OCI-LY7 (cell line): ENCODE measurements at regions of chr14 and their contacts with region 1.

Region 1: GRCh38 chr14:75230140-75231045 is 48.2 kb upstream of the FOS start:
- DNase-seq: peak; percentile 72
- H3K4me3 ChIP-seq: peak overlapping the region; percentile 5
- H3K27ac ChIP-seq: peak overlapping the region; percentile 58
- H3K4me1 ChIP-seq: peaks cover 51% of the 10 kb centered on the region
- CTCF ChIP-seq: peak; percentile 66; the same call in 1 of the 2 replicates

Region 2: GRCh38 chr14:75132382-75133086 is 97.9 kb before region 1 on chr14:
- CTCF ChIA-PET with region 1: no interaction called
- POLR2A ChIA-PET with region 1: interaction called, 4 read pairs
- intact Hi-C with region 1: loop called (anchors 5 kb)
- DNase-seq: peak; percentile 82
- H3K4me3 ChIP-seq: no peak overlapping the region
- H3K27ac ChIP-seq: no peak overlapping the region
- H3K4me1 ChIP-seq: peaks cover 15% of the 10 kb centered on the region
- CTCF ChIP-seq: peak; percentile 96

Region 3: DNA sequence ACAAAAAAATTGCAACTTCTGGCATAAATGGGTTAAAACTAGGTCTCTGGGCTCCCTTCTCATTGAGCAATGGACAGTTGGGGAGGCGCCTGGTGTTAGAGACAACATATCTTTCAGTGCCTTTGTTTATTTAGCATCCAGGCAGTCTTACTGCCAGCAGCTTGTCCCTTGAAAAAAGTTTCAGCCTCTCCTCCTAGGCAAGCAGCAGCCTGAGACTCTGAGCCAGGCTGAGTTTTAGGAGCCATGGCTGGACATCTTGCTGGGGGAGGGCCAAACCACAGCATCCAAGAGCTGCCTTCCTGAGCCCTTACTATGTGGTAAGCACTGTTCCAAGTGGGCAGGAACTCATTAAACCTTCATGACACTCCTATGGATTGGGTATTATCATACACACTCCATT is 187.3 kb after region 1 on chr14:
- CTCF ChIA-PET with region 1: no interaction called
- POLR2A ChIA-PET with region 1: no interaction called
- intact Hi-C with region 1: no loop called
- DNase-seq: no peak
- H3K4me3 ChIP-seq: no peak overlapping the region
- H3K27ac ChIP-seq: no peak overlapping the region
- H3K4me1 ChIP-seq: peaks cover 15% of the 10 kb centered on the region
- CTCF ChIP-seq: no peak